Breast epithelium (tissue), 4 donors: ENCODE measurements at regions of chr11 and their contacts with region 1.

Region 1: GRCh38 chr11:67523556-67524479 is 572 bp upstream of the CABP2 start:
- DNase-seq: no peak
- H3K4me3 ChIP-seq: no peak overlapping the region
- H3K27ac ChIP-seq: no peak overlapping the region
- H3K4me1 ChIP-seq: no peaks in the 10 kb centered on the region
- H3K27me3 ChIP-seq: peaks cover 0 to 8% of the 10 kb centered on the region in 2 donors
- CTCF ChIP-seq: no peak
- POLR2A ChIP-seq: no peak

Region 2: GRCh38 chr11:65810046-65810868 is 1713.6 kb before region 1 on chr11:
- intact Hi-C with region 1: loop called (anchors 5 kb)
- DNase-seq: no peak
- H3K4me3 ChIP-seq: no peak overlapping the region
- H3K27ac ChIP-seq: no peak overlapping the region
- H3K4me1 ChIP-seq: peaks cover 0 to 11% of the 10 kb centered on the region in 2 donors
- H3K27me3 ChIP-seq: no peaks in the 10 kb centered on the region
- CTCF ChIP-seq: no peak
- POLR2A ChIP-seq: no peak